Sigmoid colon (tissue), 7 donors: ENCODE measurements at regions of chr3 and their contacts with region 1.

Region 1: GRCh38 chr3:36729204-36730056 is 34.9 kb downstream of the DCLK3 start:
- DNase-seq: no peak
- H3K4me3 ChIP-seq: no peak overlapping the region
- H3K27ac ChIP-seq: no peak overlapping the region
- H3K4me1 ChIP-seq: no peaks in the 10 kb centered on the region
- H3K27me3 ChIP-seq: no peaks in the 10 kb centered on the region
- CTCF ChIP-seq: peak; percentile 54 to 76 (median 67)
- EP300 ChIP-seq: no peak
- POLR2A ChIP-seq: no peak

Region 2: DNA sequence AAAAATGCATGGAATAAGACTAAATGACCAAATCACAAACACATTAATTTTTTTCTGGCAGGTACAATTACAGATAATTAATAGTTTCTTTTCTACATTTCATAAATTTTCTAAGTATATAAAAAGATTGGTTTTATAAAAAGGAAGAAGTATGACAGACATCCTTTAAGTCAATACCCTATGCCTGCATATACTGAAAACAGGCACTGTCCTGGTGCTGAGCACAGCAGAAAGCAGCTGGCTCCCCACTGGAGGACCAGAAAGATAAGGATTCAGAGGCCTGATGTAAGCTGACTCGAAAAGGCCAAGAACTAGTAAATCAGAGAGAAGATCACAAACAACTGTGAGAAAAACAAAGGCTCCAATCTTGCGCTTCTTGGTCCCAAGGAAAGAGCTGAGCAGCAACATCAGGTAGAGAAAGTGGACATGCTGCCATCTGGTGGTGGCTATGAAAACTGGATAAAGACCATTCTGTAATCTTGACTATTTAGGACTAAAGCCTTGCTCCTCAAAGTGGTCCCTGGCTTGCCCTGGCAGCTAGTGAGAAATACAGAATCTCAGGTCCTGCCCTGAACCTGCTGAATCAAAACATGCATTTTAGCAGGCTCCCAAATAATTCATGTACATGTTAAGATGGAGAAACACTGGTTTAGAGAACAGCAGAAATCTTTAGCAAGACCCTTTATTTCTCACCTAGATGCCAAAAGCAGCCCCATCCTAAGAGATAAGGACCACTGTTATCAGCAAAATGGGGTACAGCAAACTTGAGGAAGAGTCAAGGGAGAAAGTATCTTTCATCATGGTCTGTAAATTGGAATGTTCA is 139.4 kb after region 1 on chr3:
- intact Hi-C with region 1: loop called (anchors 2 kb)
- DNase-seq: no peak
- H3K4me3 ChIP-seq: no peak overlapping the region
- H3K27ac ChIP-seq: no peak overlapping the region
- H3K4me1 ChIP-seq: no peaks in the 10 kb centered on the region
- H3K27me3 ChIP-seq: no peaks in the 10 kb centered on the region
- CTCF ChIP-seq: peak in 3 of 4 experiments; percentile 62 to 76 (median 64)
- EP300 ChIP-seq: no peak
- POLR2A ChIP-seq: no peak

Region 3: GRCh38 chr3:36957862-36958686 is 228.6 kb after region 1 on chr3:
- intact Hi-C with region 1: loop called (anchors 2 kb)
- DNase-seq: no peak
- H3K4me3 ChIP-seq: no peak overlapping the region
- H3K27ac ChIP-seq: no peak overlapping the region
- H3K4me1 ChIP-seq: peaks cover 0 to 11% (median 4%) of the 10 kb centered on the region in 4 donors
- H3K27me3 ChIP-seq: no peaks in the 10 kb centered on the region
- CTCF ChIP-seq: no peak
- EP300 ChIP-seq: no peak
- POLR2A ChIP-seq: no peak